HEK293T (cell line): ENCODE measurements at regions of chr16 and their contacts with region 1.

Region 1: GRCh38 chr16:85717393-85718121 is 28.8 kb upstream of the GINS2 start:
- DNase-seq: peak; percentile 77

Region 2: GRCh38 chr16:85675251-85675927 is 42.2 kb before region 1 on chr16:
- CTCF ChIA-PET with region 1: interaction called, 13 read pairs
- POLR2A ChIA-PET with region 1: no interaction called
- DNase-seq: no peak

Region 3: GRCh38 chr16:85738923-85739695 is 21.6 kb after region 1 on chr16:
- CTCF ChIA-PET with region 1: no interaction called
- POLR2A ChIA-PET with region 1: no interaction called
- DNase-seq: no peak

Region 4: GRCh38 chr16:85759631-85760419 is 42.3 kb after region 1 on chr16:
- CTCF ChIA-PET with region 1: no interaction called
- POLR2A ChIA-PET with region 1: no interaction called
- DNase-seq: peak; percentile 55

Region 5: GRCh38 chr16:85898521-85899442 is 181.2 kb after region 1 on chr16 and contains the start of gene IRF8:
- CTCF ChIA-PET with region 1: no interaction called
- POLR2A ChIA-PET with region 1: no interaction called
- DNase-seq: peak; percentile 87